ENCODE measurements at regions of chr6 and their contacts with region 1.

Region 1: GRCh38 chr6:30006170-30007131 is 54.6 kb upstream of the POLR1H start:
- DNase-seq: no peak
- ATAC-seq: peak; percentile 76
- H3K4me3 ChIP-seq: peak overlapping the region; percentile 57 to 77 (median 59)
- H3K27ac ChIP-seq: no peak overlapping the region
- H3K4me1 ChIP-seq: peaks cover 26% of the 10 kb centered on the region
- H3K27me3 ChIP-seq: no peaks in the 10 kb centered on the region; a peak in 1 of 5 replicates
- CTCF ChIP-seq: no peak
- EP300 ChIP-seq: no peak
- POLR2A ChIP-seq: no peak
- RAD21 ChIP-seq: no peak

Region 2: DNA sequence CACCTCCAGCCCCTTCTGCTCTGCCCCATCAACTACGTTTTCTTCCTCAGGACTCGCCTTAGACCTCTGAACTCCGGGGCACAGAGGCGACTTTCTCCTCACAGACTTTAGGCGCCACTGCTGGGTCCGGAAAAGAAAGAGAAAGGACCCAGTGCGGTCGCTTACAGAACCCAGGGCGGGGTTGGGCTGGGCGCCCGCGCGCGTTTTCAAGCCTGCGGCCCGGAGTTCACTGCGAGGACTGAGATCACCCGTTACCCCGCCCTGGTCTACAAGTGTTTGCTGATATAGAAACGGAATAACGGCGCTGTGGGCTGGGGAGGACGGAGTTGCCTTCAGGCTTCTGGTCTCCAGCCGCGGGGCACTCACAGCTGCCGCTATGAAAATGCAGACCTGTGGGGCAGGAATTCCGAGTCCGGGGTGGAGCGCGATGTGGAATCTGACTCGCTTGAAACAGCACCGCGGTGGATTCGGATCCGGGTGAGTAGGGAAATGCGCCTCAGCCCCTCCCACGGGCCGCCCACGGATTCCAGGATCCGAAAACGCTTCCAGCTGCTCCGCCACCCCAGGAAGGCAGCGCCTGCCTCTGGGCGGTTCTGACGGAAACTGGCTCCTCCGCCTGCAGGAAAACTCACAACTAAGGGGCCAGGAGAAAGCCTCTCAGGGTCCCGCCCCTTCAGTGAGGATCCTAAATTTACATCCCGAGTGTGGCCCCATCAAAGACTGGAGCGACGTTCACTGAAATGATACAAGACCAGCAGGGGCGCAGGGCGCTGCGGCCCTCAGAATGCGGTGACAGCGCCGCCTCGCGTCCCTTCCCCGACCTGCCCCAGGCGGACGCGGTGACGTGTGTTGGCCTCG is 253.8 kb before region 1 on chr6:
- CTCF ChIA-PET with region 1: no interaction called
- POLR2A ChIA-PET with region 1: no interaction called
- in situ Hi-C with region 1: loop called (anchors 10 kb)
- intact Hi-C with region 1: no loop called
- DNase-seq: peak; percentile 80
- ATAC-seq: peak; percentile 83
- H3K4me3 ChIP-seq: peak overlapping the region; percentile 67 to 85 (median 77)
- H3K27ac ChIP-seq: no peak overlapping the region
- H3K4me1 ChIP-seq: peaks cover 23% of the 10 kb centered on the region
- H3K27me3 ChIP-seq: peaks cover 0 to 24% of the 10 kb centered on the region in 2 experiments; a peak in 1 of 5 replicates
- CTCF ChIP-seq: peak; percentile 97
- EP300 ChIP-seq: no peak
- POLR2A ChIP-seq: no peak; a peak in 1 of 4 replicates
- RAD21 ChIP-seq: peak; percentile 91

Region 3: GRCh38 chr6:29926413-29927274 is 79.8 kb before region 1 on chr6:
- CTCF ChIA-PET with region 1: no interaction called
- POLR2A ChIA-PET with region 1: no interaction called
- in situ Hi-C with region 1: no loop called
- intact Hi-C with region 1: loop called (anchors 2 kb)
- DNase-seq: peak; percentile 78
- ATAC-seq: peak; percentile 96
- H3K4me3 ChIP-seq: peak overlapping the region; percentile 74 to 85 (median 77)
- H3K27ac ChIP-seq: peak overlapping the region; percentile 76
- H3K4me1 ChIP-seq: peaks cover 48% of the 10 kb centered on the region
- H3K27me3 ChIP-seq: no peaks in the 10 kb centered on the region
- CTCF ChIP-seq: no peak
- EP300 ChIP-seq: no peak
- POLR2A ChIP-seq: no peak
- RAD21 ChIP-seq: no peak

Region 4: DNA sequence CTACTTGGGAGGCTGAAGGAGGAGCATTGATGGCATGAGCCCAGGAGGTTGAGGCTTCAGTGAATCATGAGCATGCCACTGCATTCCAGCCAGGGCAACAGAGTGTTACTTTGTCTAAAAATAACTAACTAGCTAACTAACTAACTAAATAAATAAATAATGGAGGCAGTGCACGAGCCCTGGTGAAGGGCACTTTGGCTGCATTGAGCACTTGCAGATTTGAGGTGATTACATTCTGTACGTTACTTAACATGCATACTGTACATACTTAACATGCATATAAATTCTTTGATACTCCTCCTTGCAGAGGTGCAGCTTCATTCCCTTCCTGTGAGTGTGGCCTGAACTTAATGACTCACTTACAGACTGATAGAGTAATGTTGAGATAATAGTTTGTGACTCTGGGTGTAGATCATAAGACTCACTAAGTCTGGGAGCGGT is 53.4 kb before region 1 on chr6:
- CTCF ChIA-PET with region 1: no interaction called
- POLR2A ChIA-PET with region 1: no interaction called
- in situ Hi-C with region 1: no loop called
- intact Hi-C with region 1: no loop called
- DNase-seq: no peak
- ATAC-seq: no peak
- H3K4me3 ChIP-seq: no peak overlapping the region
- H3K27ac ChIP-seq: no peak overlapping the region
- H3K4me1 ChIP-seq: no peaks in the 10 kb centered on the region
- H3K27me3 ChIP-seq: no peaks in the 10 kb centered on the region
- CTCF ChIP-seq: no peak
- EP300 ChIP-seq: no peak
- POLR2A ChIP-seq: no peak
- RAD21 ChIP-seq: no peak

Region 5: DNA sequence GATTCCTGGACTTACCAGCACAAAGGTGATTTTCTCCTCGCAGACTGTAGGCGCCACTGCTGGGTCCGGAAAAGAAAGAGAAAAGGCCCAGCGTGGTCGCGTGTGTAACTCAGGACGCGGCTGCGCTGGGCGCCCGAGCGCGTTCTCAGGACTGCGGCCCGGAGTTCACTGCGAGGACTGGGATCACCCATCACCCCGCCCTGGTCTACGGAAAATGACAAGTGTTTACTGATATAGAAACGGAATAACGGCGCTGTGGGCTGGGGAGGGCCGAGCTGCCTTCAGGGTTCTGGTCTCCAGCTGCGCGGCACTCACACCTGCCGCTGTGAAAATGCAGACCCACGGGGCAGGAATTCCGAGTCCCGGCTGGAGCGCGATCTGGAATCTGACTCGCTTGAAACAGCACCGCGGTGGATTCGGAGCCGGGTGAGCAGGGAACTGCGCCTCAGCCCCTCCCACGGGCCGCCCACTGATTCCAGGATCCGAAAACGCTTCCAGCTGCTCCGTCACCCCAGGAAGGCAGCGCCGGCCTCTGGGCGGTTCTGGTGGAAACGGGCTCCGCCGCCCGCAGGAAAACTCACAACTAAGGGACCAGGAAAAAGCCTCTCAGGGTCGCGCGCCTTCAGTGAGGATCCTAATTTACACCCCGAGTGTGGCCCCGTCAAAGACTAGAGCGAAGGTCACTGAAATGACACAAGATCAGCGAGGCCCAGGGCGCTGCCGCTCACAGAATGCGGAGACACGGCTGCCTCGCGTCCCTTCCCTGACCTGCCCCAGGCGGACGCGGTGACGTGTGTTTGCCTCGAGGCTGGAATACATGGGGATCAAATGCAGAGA is 29.6 kb before region 1 on chr6:
- CTCF ChIA-PET with region 1: no interaction called
- POLR2A ChIA-PET with region 1: interaction called, 3 read pairs
- in situ Hi-C with region 1: no loop called
- intact Hi-C with region 1: loop called (anchors 2 kb)
- DNase-seq: peak; percentile 77
- ATAC-seq: peak; percentile 93
- H3K4me3 ChIP-seq: peak overlapping the region; percentile 54 to 76 (median 65)
- H3K27ac ChIP-seq: peak overlapping the region; percentile 76
- H3K4me1 ChIP-seq: peaks cover 40% of the 10 kb centered on the region
- H3K27me3 ChIP-seq: no peaks in the 10 kb centered on the region
- CTCF ChIP-seq: peak; percentile 60
- EP300 ChIP-seq: 0 out of 4 replicates have a peak, but pooled peaks of 1 of the 2 experiments have one; percentile 19
- POLR2A ChIP-seq: peak; percentile 57 to 64; a peak in 3 of 4 replicates
- RAD21 ChIP-seq: peak; percentile 60

Measured in HepG2 (cell line).